HCT116 (cell line): ENCODE measurements at regions of chr6 and their contacts with region 1.

Region 1: DNA sequence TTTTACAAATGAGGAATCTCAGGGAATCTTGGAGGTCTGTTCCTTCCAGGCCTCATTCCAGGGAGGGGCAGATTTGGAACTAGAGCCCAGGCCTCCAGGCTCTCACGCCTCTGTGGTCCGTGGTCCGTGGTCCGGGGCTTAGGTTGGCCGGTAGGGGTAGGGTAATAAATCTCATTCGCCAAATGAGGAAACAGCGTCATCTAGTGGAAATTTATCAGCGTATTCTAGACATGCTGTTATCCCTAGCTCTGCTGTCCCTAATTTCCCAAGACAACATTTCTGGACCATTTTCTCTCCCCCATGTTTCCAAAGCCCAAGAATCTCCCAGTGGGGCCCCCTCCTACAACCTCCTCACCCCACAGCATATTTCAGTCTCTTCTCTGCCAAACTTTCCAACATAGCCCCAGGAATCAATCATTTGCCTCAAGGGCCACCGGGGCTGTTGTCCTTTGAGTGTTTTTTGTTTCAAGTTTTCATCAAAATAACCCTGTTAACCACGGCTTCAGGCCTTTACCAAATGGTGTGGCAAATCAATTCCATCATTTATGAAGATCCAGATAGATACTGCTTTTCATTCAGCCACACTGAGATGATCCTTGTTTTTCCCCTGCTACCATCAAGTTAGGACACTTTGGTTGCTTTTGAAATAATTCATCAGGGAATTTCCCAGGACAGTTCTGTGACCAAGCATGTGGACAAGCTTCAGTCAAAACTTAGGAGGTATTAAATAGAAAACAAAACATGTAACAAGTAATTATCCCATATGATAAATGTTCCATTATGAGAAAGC is 126.8 kb downstream of the ALDH8A1 start:
- DNase-seq: peak; percentile 86
- ATAC-seq: peak; percentile 99
- H3K4me3 ChIP-seq: no peak overlapping the region
- H3K27ac ChIP-seq: no peak overlapping the region
- H3K4me1 ChIP-seq: no peaks in the 10 kb centered on the region; a peak in 1 of 4 replicates
- H3K27me3 ChIP-seq: no peaks in the 10 kb centered on the region
- CTCF ChIP-seq: peak; percentile 83 to 97 (median 94)
- POLR2A ChIP-seq: no peak
- RAD21 ChIP-seq: peak; percentile 98

Region 2: DNA sequence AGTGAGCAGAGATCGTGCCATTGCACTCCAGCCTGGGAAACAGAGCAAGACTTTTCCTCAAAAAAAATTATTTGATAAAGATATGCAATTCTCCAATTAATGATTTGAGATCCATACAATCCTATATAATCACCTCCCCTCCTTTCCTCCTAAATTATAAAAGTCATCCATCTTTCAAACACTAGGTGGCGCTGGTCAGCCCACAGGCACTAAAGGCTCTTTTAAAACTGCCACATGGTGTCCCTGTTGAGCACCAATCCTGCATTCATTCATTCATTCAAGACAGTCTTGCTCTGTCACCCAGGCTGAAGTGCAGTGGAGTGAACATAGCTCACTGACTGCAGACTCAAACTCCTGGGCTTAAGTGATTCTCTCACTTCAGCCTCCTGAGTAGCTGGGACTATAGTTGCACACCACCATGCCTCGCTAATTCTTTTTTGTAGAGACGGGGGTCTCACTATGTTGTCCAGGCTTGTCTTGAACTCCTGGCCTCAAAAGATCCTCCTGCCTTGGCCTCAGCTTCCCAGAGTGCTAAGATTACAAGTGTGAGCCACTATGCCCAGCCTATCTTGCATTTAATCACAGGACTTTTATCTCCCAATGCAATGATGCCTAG is 711.9 kb before region 1 on chr6:
- CTCF ChIA-PET with region 1: interaction called, 3 read pairs
- POLR2A ChIA-PET with region 1: no interaction called
- RAD21 ChIA-PET with region 1: no interaction called
- intact Hi-C with region 1: loop called (anchors 1 kb)
- DNase-seq: peak; percentile 58
- ATAC-seq: peak; percentile 81
- H3K4me3 ChIP-seq: no peak overlapping the region
- H3K27ac ChIP-seq: no peak overlapping the region
- H3K4me1 ChIP-seq: no peaks in the 10 kb centered on the region
- H3K27me3 ChIP-seq: no peaks in the 10 kb centered on the region
- CTCF ChIP-seq: peak; percentile 87 to 99 (median 98)
- POLR2A ChIP-seq: no peak
- RAD21 ChIP-seq: peak; percentile 56

Region 3: GRCh38 chr6:134161036-134161435 is 662.1 kb before region 1 on chr6:
- CTCF ChIA-PET with region 1: interaction called, 6 read pairs
- POLR2A ChIA-PET with region 1: no interaction called
- RAD21 ChIA-PET with region 1: interaction called in 1 of 2 experiments, 3 read pairs
- intact Hi-C with region 1: loop called (anchors 1 kb)
- DNase-seq: no peak
- ATAC-seq: no peak
- H3K4me3 ChIP-seq: no peak overlapping the region
- H3K27ac ChIP-seq: no peak overlapping the region
- H3K4me1 ChIP-seq: no peaks in the 10 kb centered on the region
- H3K27me3 ChIP-seq: no peaks in the 10 kb centered on the region
- CTCF ChIP-seq: no peak
- POLR2A ChIP-seq: no peak
- RAD21 ChIP-seq: no peak

Region 4: GRCh38 chr6:134640975-134641429 is 182.1 kb before region 1 on chr6:
- CTCF ChIA-PET with region 1: no interaction called
- POLR2A ChIA-PET with region 1: no interaction called
- RAD21 ChIA-PET with region 1: no interaction called
- intact Hi-C with region 1: loop called (anchors 2 kb)
- DNase-seq: peak; percentile 58
- ATAC-seq: peak; percentile 79
- H3K4me3 ChIP-seq: no peak overlapping the region
- H3K27ac ChIP-seq: no peak overlapping the region
- H3K4me1 ChIP-seq: peaks cover 10 to 25% of the 10 kb centered on the region in 2 experiments; a peak in 3 of 4 replicates
- H3K27me3 ChIP-seq: no peaks in the 10 kb centered on the region
- CTCF ChIP-seq: peak; percentile 65 to 93 (median 86)
- POLR2A ChIP-seq: no peak
- RAD21 ChIP-seq: peak; percentile 87

Region 5: DNA sequence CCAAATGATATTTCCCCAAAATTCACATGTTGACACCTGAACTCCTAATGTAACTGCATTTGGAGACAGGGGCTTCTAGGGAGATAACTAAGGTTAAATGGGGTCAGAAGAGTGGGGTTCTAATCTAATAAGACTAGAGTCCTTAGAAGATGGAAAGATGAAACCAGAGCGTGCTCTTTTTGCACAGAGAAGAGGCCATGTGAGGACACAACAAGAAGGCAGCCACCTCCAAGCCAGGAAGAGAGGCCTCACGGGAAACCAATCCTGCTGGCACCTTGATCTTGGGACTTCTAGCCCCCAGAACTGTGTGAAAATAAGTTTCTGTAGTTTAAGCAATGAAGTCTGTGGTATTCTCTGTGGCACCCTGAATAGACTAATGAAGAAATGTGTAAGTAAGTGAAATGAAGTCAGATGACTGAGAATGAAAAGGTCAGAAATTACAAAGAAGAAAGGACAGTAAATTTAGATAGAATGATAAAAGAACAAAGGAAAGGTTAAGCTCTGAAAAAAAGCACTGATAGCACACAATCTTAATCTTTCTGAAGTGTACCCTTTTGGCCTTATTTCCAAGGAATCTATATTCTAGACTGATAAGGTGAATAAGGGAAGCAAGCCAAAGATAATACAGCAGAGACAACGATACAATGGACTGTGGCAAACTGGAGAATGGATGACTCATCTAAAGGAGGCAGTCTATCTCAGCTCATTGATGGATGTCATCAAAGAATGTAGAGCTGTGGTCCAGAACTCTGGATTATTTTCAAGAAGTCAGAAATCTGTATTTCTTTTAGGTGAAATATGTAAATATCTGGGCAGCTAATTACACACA is 468.4 kb after region 1 on chr6:
- CTCF ChIA-PET with region 1: no interaction called
- POLR2A ChIA-PET with region 1: no interaction called
- RAD21 ChIA-PET with region 1: no interaction called
- intact Hi-C with region 1: no loop called
- DNase-seq: peak; percentile 12
- ATAC-seq: peak; percentile 87
- H3K4me3 ChIP-seq: no peak overlapping the region
- H3K27ac ChIP-seq: no peak overlapping the region
- H3K4me1 ChIP-seq: peaks cover 11 to 13% of the 10 kb centered on the region in 2 experiments
- H3K27me3 ChIP-seq: no peaks in the 10 kb centered on the region
- CTCF ChIP-seq: no peak
- POLR2A ChIP-seq: no peak
- RAD21 ChIP-seq: no peak